OCI-LY7 (cell line): ENCODE measurements at regions of chr11 and their contacts with region 1.

Region 1: GRCh38 chr11:128720522-128720985 is 26.7 kb downstream of the FLI1 start:
- DNase-seq: peak; percentile 90
- H3K4me3 ChIP-seq: peak overlapping the region; percentile 70
- H3K27ac ChIP-seq: peak overlapping the region; percentile 99
- H3K4me1 ChIP-seq: peaks cover 93% of the 10 kb centered on the region
- CTCF ChIP-seq: no peak

Region 2: GRCh38 chr11:128733440-128734102 is 13.0 kb after region 1 on chr11:
- CTCF ChIA-PET with region 1: interaction called, 21 read pairs
- POLR2A ChIA-PET with region 1: interaction called, 173 read pairs
- intact Hi-C with region 1: loop called (anchors 1 kb)
- DNase-seq: peak; percentile 83
- H3K4me3 ChIP-seq: peak overlapping the region; percentile 50
- H3K27ac ChIP-seq: peak overlapping the region; percentile 99
- H3K4me1 ChIP-seq: peaks cover 100% of the 10 kb centered on the region
- CTCF ChIP-seq: no peak

Region 3: DNA sequence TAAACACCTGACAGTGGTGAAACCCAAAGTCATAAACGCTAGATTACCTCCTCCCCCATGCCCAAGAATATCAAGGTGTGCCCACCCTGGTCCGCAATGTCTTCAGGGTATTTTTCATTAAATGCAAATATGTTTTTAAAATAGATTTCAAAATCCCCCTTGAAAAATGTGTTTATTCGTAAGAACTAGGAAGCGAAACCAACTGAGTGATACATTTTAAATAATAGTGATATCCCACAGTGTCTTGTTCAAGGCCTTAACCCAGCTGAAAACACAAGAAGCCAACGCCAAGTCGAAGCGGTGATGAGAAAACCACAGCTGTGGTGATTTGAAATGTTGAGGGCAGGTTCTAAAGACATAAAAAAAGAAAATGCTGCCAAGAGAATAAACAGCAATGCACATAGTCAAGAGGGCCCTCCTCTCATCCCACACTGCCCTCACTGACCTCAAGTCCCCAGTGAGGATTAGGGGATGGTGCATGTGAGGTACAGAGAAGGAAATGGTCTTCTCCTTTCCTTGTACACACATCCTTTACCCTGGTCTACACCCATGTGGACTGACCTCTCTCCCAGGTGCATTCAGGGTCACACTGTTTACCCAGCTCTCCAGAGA is 121.0 kb after region 1 on chr11:
- CTCF ChIA-PET with region 1: no interaction called
- POLR2A ChIA-PET with region 1: interaction called, 4 read pairs
- intact Hi-C with region 1: loop called (anchors 1 kb)
- DNase-seq: peak; percentile 84
- H3K4me3 ChIP-seq: peak overlapping the region; percentile 37
- H3K27ac ChIP-seq: peak overlapping the region; percentile 96
- H3K4me1 ChIP-seq: peaks cover 85% of the 10 kb centered on the region
- CTCF ChIP-seq: no peak